AG04449 (cell line): ENCODE measurements at regions of chr12 and their contacts with region 1.

Region 1: DNA sequence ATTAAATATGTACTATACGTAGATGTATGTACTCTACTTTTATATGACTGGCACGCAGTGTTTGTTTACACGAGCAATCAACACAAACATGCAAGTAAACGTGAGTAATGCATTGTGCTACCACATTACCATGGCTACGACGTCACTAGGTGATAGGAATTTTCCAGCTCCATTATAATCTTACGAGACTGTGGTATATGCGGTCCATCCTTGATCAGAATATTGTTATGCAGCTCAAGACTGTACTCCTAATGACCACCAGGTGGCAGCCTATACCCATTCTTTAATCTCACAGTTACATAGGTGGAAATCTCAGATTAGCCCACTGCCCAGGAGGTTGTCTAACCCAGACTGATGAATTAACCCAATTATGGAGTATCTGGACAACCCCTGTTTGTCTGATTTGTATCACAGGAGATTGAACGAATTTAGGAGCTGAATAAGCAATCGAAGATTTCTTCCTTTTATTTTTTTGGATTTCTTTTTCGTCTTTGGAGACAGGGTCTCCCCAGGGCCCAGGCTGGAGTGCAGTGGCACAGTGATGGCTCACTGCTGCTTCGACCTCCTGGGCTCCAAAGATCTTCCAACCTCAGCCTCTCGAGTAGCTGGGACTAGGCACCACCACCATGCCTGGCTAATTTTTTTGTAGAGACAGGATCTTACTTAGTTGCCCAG is 8.7 kb upstream of the TESPA1 start:
- DNase-seq: peak; percentile 4
- H3K4me3 ChIP-seq: no peak overlapping the region
- CTCF ChIP-seq: peak; percentile 71

Region 2: DNA sequence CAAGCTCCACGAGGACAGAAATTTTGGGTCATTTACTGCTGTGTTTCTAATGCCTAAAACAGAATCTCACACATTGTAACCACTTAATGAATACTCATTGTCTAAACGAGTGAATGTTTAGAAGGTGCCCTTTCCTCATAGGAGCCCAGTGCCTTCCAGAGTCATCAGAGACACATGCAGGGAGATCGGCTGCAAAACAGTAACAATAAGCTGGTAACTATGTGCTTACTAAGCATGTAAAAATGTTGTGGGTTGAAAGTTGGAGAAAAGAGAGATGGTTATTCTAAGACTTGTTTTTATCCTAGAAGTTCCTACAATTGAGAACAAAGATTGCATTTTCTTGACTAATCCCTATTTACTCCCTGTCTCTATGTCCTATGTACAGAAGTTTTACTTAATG is 16.1 kb before region 1 on chr12:
- CTCF ChIA-PET with region 1: interaction called, 38 read pairs
- POLR2A ChIA-PET with region 1: no interaction called
- DNase-seq: peak; percentile 45
- H3K4me3 ChIP-seq: no peak overlapping the region
- CTCF ChIP-seq: no peak

Region 3: GRCh38 chr12:55019779-55020178 is 26.5 kb after region 1 on chr12 and contains the start of gene NEUROD4:
- CTCF ChIA-PET with region 1: interaction called, 10 read pairs
- POLR2A ChIA-PET with region 1: no interaction called
- DNase-seq: peak; percentile 9
- H3K4me3 ChIP-seq: no peak within 1 kb of the TSS
- CTCF ChIP-seq: no peak

Region 4: GRCh38 chr12:55073043-55074022 is 80.0 kb after region 1 on chr12:
- CTCF ChIA-PET with region 1: interaction called, 272 read pairs
- POLR2A ChIA-PET with region 1: no interaction called
- DNase-seq: peak; percentile 23
- H3K4me3 ChIP-seq: no peak overlapping the region
- CTCF ChIP-seq: peak; percentile 75

Region 5: DNA sequence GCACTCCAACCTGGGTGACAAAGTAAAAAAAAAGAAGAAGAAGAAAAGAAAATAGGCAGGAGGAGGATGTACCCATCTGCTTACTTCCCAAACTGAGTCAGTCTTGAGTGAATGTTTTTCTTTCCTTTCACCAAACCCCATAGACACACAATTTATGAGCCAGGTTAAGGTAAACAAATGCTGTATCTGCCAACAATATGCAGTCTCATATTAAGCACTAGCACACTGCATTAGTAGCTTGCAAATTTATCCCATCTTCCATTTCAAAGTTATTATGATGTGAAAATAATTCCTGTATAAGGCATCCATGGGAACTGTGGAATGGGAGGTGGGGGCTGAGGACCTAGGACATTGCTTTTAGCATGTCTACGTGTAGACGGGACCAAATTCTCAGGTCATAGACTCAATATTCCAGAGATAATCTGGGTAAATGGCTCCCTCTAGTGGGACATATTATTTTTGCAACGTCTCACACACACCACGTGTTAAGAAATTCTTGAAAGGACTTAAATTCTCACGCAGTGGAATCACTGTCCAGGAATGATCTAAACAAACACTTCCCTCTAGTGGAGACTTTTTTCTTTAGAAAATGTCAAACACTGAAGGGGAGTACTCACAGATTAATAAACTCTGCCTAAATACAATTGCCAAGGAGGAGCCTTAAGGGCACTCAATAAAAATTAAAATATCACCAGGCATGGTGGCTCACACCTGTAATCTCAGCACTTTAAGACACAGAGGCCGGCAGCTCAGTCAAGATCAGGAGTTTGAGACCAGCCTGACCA is 626.2 kb after region 1 on chr12:
- CTCF ChIA-PET with region 1: interaction called, 13 read pairs
- POLR2A ChIA-PET with region 1: no interaction called
- DNase-seq: peak; percentile 78
- H3K4me3 ChIP-seq: no peak overlapping the region
- CTCF ChIP-seq: peak; percentile 38